ENCODE measurements at regions of chr1 and their contacts with region 1.

Region 1: DNA sequence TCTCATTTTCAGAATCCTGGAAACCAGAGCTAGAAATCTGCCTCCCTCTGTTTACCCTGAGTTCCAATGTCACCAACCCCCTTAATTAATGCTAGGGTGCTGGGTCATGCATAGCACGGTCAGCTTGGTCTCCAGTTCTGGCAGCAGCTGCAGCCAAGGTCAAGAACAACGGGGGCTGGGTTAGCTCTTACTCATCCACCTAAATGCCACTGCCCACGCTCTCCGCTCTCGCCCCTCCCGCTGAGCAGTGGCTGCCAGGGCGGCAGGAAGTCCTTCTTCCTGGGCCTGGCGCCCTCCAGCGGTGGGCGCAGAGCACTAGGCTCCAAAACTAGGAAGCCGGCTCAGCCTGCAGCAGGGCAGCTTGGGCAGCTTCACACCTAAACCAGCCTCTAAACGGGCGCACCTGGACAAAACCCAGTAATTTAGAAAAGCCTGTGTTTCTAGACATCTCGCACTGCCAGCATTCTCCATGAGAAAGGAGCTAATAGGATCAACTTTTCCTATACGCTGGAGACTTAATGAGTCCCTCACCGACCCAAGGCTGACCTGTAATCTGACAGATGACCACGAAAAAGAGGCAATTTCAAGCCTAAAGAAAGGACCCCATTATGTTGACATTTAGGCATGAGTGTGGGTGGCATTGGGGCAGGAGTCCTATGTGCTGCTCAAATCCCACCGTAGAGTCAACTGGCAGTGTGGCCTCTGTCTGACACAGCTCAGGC is 78.3 kb upstream of the LRRN2 start:
- DNase-seq: peak; percentile 65
- H3K4me3 Mint-ChIP-seq: peak overlapping the region; percentile 56
- H3K27ac Mint-ChIP-seq: no peak overlapping the region
- H3K4me1 Mint-ChIP-seq: peaks cover 14% of the 10 kb centered on the region
- H3K27me3 Mint-ChIP-seq: peaks cover 33% of the 10 kb centered on the region

Region 2: DNA sequence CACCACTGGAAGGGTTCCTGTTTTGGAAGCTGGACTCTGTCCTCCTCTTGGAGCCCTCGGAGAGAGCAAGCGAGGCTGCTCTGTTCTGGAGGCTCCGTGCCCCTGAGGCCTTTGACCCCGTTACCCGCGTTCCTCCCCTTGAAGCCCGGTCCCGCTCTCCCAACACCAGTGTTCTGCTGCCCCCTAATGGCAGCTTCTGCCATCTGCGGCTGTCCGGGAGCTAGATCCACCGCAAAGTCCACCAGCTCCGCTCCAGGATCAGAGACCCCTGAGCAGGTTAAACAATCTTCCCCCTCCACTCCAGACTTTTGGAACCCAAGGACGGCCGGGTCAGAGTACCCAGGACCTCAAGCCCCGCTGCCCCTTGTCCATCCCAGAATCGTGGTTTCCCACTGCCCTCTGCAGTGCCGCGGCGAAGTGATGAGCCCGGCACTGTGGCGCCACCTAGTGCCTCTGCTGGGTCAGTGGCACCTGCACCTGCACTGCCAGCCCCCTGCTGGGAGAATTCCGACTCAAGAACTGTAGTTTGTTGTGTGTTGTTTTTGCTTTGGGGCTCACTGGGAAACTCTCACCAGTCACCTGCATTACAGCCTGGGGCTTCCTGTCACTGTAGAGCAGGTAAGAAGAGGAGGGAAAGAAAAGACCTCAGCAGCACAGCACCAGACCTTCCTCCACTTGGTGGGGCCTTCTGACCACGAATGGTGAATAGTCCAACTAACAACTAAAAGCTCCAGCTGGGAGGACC is 43.2 kb after region 1 on chr1:
- intact Hi-C with region 1: loop called (anchors 1 kb)
- DNase-seq: peak; percentile 77
- H3K4me3 Mint-ChIP-seq: peak overlapping the region; percentile 91
- H3K27ac Mint-ChIP-seq: peak overlapping the region; percentile 71
- H3K4me1 Mint-ChIP-seq: peaks cover 4% of the 10 kb centered on the region
- H3K27me3 Mint-ChIP-seq: peaks cover 9% of the 10 kb centered on the region